ENCODE measurements at regions of chr20 and their contacts with region 1.

Region 1: DNA sequence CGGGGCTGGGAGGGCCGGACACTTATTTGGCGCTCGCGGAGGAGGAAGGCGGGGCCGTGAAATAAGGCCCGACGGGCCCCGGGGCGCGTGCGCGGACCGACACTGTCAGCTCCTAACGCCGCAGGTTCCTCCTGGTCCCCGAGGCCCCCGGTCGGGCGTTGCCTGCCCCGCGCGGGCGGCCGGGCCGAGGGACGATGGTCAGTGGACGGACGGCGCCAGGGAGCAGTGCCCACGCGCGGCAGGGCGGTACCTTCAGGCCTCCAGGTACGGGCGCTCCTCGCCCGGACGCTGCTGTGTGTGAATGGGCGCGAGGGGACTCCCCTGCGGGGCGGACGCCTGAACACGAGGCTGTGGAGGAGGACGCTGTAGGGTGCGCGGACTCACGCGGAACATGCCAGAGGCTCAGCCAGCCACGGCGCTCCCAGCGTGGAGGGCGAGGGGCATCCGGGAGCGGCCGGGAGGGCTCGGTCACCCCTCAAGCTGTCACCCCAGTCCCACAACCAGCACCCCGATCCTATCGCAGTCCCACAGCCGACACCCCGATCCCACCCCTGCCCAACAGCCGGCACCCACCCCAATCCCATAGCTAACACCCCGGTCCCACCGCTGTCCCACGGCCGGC is 339 bp upstream of the GMEB2 start:
- DNase-seq: peak; percentile 95
- H3K4me3 Mint-ChIP-seq: peak overlapping the region; percentile 100
- H3K27ac Mint-ChIP-seq: peak overlapping the region; percentile 98
- H3K4me1 Mint-ChIP-seq: peaks cover 23% of the 10 kb centered on the region
- H3K27me3 Mint-ChIP-seq: no peaks in the 10 kb centered on the region

Region 2: DNA sequence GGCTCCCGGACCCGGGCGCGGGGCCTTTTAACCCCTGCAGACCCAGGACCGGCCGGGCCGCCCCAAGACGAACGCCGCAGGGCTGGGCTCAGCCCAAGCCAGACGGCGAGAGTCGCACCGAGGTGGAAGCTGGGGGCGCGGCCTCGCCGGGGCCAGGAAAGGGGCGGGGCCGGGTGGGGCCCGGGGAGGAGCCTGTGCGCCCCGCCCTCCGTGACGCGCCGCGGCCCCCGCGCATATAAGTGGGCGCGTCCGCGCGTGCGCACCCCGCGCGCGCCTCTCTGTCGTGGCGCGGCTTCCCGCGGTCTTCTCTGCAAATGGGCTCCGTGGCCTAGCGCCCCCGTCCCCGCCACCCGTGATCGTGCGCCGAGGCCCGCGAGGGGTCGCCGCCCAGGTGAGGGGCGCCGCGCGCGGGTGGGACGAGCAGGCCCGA is 106.7 kb before region 1 on chr20 and contains the start of gene PPDPF:
- intact Hi-C with region 1: loop called (anchors 2 kb)
- DNase-seq: peak; percentile 81
- H3K4me3 Mint-ChIP-seq: peak within 1 kb of the TSS; percentile 84
- H3K27ac Mint-ChIP-seq: peak within 1 kb of the TSS; percentile 70
- H3K4me1 Mint-ChIP-seq: no peaks in the 10 kb centered on the region
- H3K27me3 Mint-ChIP-seq: peaks cover 4% of the 10 kb centered on the region
- total RNA-seq, gene PPDPF: 117 and 122 TPM in 2 replicates

Region 3: DNA sequence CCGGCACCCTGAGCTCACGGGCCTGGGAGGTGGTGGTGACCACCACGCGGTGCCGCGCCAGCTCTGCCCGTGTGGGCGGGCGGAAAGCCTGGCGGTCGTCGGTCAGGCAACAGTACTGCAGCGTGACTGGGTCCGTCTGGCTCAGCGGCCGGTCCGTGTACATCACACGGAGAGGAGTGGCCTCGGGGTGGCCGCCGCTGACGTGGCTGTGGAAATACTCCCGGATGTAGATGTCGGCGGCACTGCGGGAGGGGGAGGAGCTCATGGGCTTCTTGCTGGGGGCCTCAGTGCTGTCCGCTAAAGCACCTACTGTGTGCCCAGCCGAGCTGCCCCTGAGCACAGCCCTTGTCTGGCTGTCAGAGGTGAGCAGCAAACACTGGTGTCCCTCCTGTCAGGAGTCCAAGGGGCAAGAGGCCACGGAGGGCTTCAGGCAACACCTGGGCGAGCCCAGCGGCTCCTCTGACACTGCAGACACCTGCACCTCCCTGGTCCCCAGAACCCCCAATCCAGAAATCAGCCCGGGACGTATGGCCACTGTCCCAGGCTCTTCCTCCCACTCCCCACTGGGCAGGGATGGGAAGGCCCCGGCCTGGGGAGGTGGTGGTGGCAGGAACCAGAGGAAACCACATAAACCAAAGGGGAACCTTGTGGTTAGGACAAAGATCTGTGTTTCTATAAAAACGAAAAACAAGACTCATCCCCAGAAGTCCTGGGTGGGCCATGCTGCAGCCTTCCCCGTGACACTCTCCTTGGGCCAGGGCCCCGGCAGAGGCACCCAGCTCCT is 59.7 kb before region 1 on chr20:
- intact Hi-C with region 1: loop called (anchors 5 kb)
- DNase-seq: peak; percentile 59
- H3K4me3 Mint-ChIP-seq: peak overlapping the region; percentile 69
- H3K27ac Mint-ChIP-seq: peak overlapping the region; percentile 70
- H3K4me1 Mint-ChIP-seq: peaks cover 8% of the 10 kb centered on the region
- H3K27me3 Mint-ChIP-seq: no peaks in the 10 kb centered on the region

Region 4: GRCh38 chr20:63580796-63581461 is 46.3 kb before region 1 on chr20:
- intact Hi-C with region 1: no loop called
- DNase-seq: peak; percentile 47
- H3K4me3 Mint-ChIP-seq: no peak overlapping the region
- H3K27ac Mint-ChIP-seq: no peak overlapping the region
- H3K4me1 Mint-ChIP-seq: no peaks in the 10 kb centered on the region
- H3K27me3 Mint-ChIP-seq: peaks cover 24% of the 10 kb centered on the region

Region 5: DNA sequence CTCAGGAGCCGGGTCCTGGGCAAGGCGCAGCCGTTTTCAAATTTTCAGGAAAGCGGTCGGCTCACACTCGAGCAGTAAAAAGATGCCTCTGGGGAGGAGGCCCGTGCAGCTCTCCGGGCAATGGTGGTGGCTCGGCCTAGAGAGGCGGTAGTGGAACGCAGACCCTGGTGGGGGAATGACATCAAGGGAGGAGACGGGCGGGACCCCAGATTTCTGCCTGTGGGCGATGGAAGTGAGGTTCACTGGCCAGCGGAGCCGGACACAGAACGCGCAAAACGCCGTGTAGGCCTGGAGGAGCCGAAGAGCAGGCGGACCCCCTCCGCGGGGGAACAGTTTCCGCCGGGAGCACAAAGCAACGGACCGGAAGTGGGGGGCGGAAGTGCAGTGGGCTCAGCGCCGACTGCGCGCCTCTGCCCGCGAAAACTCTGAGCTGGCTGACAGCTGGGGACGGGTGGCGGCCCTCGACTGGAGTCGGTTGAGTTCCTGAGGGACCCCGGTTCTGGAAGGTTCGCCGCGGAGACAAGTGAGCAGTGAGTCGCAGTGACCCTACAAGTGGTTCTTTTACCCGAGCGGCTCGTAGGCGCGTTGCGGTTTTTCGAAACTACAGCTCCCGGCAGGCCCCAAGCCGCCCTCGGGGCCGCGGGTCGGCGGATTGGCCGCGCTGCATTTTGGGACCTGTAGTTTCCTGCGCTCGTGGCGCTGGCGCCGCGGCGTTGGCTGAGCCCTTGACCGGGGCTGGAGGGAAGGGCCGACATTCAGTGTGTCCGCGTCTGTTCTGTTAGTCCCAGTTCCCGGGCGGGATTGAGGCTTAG is 30.9 kb after region 1 on chr20 and contains the start of gene RTEL1:
- intact Hi-C with region 1: loop called (anchors 1 kb)
- DNase-seq: peak; percentile 87
- H3K4me3 Mint-ChIP-seq: peak within 1 kb of the TSS; percentile 94
- H3K27ac Mint-ChIP-seq: peak within 1 kb of the TSS; percentile 95
- H3K4me1 Mint-ChIP-seq: peaks cover 41% of the 10 kb centered on the region
- H3K27me3 Mint-ChIP-seq: peaks cover 7% of the 10 kb centered on the region
- total RNA-seq, gene RTEL1: 54.4 and 55.5 TPM in 2 replicates

Region 6: GRCh38 chr20:63894358-63895201 is 267.3 kb after region 1 on chr20 and contains the start of gene DNAJC5:
- intact Hi-C with region 1: loop called (anchors 1 kb)
- DNase-seq: peak; percentile 98
- H3K4me3 Mint-ChIP-seq: peak within 1 kb of the TSS; percentile 89
- H3K27ac Mint-ChIP-seq: peak within 1 kb of the TSS; percentile 96
- H3K4me1 Mint-ChIP-seq: peaks cover 42% of the 10 kb centered on the region
- H3K27me3 Mint-ChIP-seq: no peaks in the 10 kb centered on the region
- total RNA-seq, gene DNAJC5: 47.5 and 48.2 TPM in 2 replicates

Measured in activated T-helper 1 cell treated with anti-CD3 and anti-CD28 coated beads, Interleukin-12 subunit alpha, Interleukin-12 subunit beta, Interleukin-2, Interleukin-4 antibody, amounts not matched to agents 30 ng/mL and 10 ng/mL and 1 ng/mL, durations not matched to agents 14 hours and 24 hours and 36 hours (primary cell).